ENCODE measurements at regions of chr14 and their contacts with region 1.

Region 1: GRCh38 chr14:67526676-67527459 is 6.2 kb upstream of the PLEKHH1 start:
- DNase-seq: peak; percentile 60
- ATAC-seq: peak; percentile 91
- H3K4me3 Mint-ChIP-seq: no peak overlapping the region
- H3K27ac Mint-ChIP-seq: no peak overlapping the region
- H3K4me1 Mint-ChIP-seq: no peaks in the 10 kb centered on the region
- H3K27me3 Mint-ChIP-seq: peaks cover 12% of the 10 kb centered on the region

Region 2: GRCh38 chr14:67221248-67221981 is 305.5 kb before region 1 on chr14:
- CTCF ChIA-PET with region 1: no interaction called
- POLR2A ChIA-PET with region 1: no interaction called
- intact Hi-C with region 1: no loop called
- DNase-seq: no peak
- ATAC-seq: no peak
- H3K4me3 Mint-ChIP-seq: no peak overlapping the region
- H3K27ac Mint-ChIP-seq: no peak overlapping the region
- H3K4me1 Mint-ChIP-seq: no peaks in the 10 kb centered on the region
- H3K27me3 Mint-ChIP-seq: peaks cover 7% of the 10 kb centered on the region

Region 3: DNA sequence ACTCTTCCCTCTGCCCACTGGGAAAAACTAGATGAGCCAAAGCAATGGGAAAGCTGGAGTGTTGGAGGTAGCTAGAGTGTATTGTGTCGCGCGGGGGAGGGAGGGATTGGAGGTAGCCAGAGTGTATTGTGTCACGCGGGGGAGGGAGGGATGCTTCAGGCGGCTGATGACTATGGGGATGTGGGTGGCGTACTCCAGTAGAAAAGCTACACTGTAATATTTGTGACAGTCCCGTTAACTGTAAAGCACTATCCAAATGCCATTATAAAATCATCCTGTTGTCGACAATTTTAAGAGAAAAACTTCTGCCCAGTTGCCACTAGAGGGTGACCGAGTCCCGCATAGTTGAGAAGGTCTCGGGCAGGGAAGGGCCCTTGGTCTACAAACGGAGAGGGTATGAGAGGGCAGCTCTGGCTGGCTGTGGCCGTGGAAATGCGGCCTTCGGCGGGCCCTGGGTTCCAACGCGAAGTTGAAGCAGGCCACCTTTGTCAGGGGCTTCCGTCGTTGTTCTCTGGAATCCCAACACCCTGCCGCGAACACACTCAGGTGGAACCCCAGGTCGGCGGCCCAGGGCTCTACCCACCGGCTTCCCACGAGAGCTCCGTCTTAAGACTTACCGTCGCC is 99.8 kb before region 1 on chr14:
- CTCF ChIA-PET with region 1: interaction called, 5 read pairs
- POLR2A ChIA-PET with region 1: no interaction called
- intact Hi-C with region 1: loop called in 1 of 2 experiments (anchors 10 kb)
- DNase-seq: peak; percentile 85
- ATAC-seq: peak; percentile 98
- H3K4me3 Mint-ChIP-seq: no peak overlapping the region
- H3K27ac Mint-ChIP-seq: no peak overlapping the region
- H3K4me1 Mint-ChIP-seq: no peaks in the 10 kb centered on the region
- H3K27me3 Mint-ChIP-seq: peaks cover 19% of the 10 kb centered on the region

Region 4: GRCh38 chr14:67453575-67454300 is 73.1 kb before region 1 on chr14:
- CTCF ChIA-PET with region 1: no interaction called
- POLR2A ChIA-PET with region 1: no interaction called
- intact Hi-C with region 1: no loop called
- DNase-seq: no peak
- ATAC-seq: no peak
- H3K4me3 Mint-ChIP-seq: no peak overlapping the region
- H3K27ac Mint-ChIP-seq: no peak overlapping the region
- H3K4me1 Mint-ChIP-seq: no peaks in the 10 kb centered on the region
- H3K27me3 Mint-ChIP-seq: no peaks in the 10 kb centered on the region

Region 5: GRCh38 chr14:67487937-67488893 is 38.7 kb before region 1 on chr14 and contains the start of gene TMEM229B:
- CTCF ChIA-PET with region 1: interaction called, 11 read pairs
- POLR2A ChIA-PET with region 1: no interaction called
- intact Hi-C with region 1: no loop called
- DNase-seq: peak; percentile 85
- ATAC-seq: peak; percentile 97
- H3K4me3 Mint-ChIP-seq: peak within 1 kb of the TSS; percentile 78
- H3K27ac Mint-ChIP-seq: peak within 1 kb of the TSS; percentile 91
- H3K4me1 Mint-ChIP-seq: peaks cover 55% of the 10 kb centered on the region
- H3K27me3 Mint-ChIP-seq: no peaks in the 10 kb centered on the region
- total RNA-seq, gene TMEM229B: 1.3 to 1.5 TPM

Region 6: DNA sequence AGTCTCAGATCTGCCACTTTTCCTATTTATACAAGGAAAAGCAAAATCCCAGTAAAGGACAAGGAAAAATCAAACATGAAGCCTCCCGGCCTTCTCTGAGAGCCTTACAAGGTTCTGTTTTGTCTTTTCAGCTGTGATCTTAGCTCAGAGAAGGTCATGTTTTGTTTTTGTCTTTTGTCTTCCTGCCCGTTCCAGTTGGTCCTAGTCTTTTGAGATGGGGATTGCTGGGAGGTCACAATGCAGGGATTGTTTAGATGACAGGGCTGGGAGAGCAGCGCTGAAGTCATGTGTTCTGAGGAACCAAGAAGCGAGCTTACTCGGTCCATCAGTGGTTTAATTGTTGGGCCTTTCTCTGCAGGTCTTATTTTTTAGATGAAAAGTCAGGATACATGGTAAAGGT is 12.2 kb after region 1 on chr14:
- CTCF ChIA-PET with region 1: interaction called, 12 read pairs
- POLR2A ChIA-PET with region 1: no interaction called
- intact Hi-C with region 1: no loop called
- DNase-seq: no peak
- ATAC-seq: no peak
- H3K4me3 Mint-ChIP-seq: no peak overlapping the region
- H3K27ac Mint-ChIP-seq: no peak overlapping the region
- H3K4me1 Mint-ChIP-seq: peaks cover 8% of the 10 kb centered on the region
- H3K27me3 Mint-ChIP-seq: peaks cover 25% of the 10 kb centered on the region

Measured in activated CD4-positive, alpha-beta T cell treated with anti-CD3 and anti-CD28 coated beads for 36 hours (primary cell).